Right ventricle myocardium inferior (tissue), 1 donor: ENCODE measurements at regions of chr9 and their contacts with region 1.

Region 1: GRCh38 chr9:70602321-70603019 is 188.0 kb upstream of the KLF9 start:
- DNase-seq: no peak
- ATAC-seq: peak; percentile 59

Region 2: DNA sequence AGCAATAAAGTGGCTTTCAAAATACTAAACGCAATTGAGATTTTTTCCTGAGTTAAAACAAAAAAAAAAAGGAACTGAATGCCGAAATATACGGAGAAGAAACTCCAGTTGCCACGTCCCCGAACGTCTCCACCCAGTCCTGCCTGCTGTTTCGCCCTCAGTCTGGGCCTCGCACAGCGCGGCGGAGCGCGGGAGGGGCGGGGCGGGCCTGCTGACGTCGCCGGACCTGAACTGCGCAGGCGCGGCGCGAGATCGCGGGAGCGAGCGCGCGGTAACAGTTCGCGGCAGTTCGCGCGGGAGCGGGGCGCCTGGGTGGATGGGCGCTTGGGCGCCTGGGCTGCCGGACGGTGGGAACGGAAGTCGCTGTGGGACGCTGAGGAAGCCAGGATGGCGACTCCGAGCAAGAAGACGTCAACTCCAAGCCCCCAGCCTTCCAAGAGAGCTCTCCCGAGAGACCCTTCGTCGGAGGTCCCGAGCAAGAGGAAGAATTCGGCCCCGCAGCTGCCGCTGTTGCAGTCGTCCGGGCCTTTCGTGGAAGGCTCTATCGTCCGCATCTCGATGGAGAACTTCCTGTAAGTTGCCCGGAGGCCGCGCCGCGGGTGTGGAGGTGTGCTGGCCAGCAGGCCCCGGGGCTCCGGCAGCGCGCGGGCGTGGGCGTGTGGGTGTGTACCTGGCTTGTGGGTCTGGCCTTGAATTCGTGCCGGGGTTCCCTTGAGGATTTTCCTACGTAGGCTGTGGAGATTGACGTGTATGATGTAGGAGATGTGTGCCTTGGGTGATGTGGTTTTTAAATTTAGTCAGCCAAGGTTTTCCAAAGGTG is 343.6 kb before region 1 on chr9 and contains the start of gene SMC5:
- intact Hi-C with region 1: loop called (anchors 5 kb)
- DNase-seq: peak; percentile 95
- ATAC-seq: peak; percentile 98
- total RNA-seq, gene SMC5: 10.0 TPM

Region 3: DNA sequence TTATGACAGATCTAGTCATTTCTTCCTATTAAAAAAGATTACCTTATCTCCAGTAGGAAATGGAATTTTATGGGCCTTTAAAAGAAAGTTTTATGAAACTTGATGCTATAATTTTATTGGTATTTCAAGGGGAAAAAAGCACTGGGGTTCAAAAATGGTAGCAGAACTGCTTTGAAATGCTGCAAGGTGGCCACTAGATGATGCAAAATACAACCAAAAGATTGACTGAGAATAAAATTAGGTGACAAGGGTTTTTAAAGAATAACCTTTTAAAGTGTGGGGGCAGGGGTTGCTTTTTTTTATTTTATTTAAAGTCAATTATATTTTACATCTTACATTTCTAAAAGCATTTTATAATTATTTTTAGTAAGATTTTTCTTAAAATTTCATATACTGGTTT is 249.7 kb before region 1 on chr9:
- intact Hi-C with region 1: loop called (anchors 1 kb)
- DNase-seq: no peak
- ATAC-seq: no peak

Region 4: DNA sequence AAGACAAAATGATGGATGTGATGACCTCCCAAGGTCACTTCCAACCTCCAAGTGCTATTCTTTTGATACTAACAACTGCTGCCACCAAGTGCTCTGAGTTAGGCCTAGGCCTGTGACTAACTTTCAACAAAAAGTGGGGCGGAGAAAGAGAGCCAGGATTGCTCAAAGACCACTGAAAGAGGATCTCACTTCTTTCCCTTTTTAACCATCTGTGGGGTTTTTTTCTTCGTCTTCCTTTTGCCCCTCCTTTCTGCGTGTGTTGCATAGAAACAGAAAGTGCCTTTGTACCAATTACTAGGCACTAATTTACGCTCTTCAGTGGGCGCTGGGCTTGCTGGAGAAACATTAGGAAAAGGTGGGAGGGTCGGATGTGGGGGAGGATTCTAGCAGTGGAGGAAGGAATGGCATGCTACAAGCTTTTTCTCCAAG is 196.0 kb before region 1 on chr9:
- intact Hi-C with region 1: loop called (anchors 5 kb)
- DNase-seq: no peak
- ATAC-seq: no peak

Region 5: DNA sequence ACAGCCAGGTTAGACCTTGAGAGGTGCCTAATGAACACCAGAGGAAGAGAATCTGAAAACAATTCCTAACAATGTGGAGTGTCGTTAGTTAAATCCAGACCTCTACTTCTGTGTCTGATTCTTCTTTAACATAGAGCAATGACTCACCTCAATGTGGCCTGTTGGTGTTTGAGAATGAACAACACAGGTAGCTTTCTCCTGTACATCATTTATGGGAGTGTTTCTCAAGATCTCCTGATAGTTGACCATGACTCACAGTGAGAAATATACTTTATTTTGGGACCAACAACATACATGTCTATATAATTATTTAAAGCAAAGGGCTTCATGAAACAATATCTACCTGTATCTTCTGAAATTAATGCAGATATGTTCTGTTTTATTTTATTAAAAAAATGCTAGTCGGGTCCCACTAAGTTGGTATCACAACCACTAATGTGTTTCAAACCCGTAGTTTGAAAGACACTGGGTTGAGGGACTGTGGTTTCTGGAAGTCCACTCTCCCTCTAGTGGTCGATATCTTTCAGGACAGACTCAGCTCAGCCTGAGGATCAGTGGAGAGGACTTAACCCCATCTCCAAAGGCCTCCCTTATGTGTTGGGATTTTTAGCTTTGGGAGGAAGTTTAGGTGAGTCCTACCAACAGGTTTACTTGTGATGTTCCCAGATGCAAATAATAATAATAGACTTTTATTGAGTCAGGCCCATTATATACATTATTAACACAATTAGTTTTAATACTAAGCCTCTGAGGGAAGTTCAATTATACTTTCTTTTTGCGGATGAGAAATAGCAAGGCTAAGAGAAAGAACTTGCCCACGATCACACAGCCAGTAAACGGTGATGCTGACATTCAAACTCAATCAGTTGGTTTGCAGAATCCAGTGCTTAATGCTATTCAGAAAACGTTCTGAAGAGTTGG is 118.0 kb before region 1 on chr9:
- intact Hi-C with region 1: loop called (anchors 1 kb)
- DNase-seq: no peak
- ATAC-seq: peak; percentile 67

Region 6: GRCh38 chr9:70553707-70554673 is 48.5 kb before region 1 on chr9:
- intact Hi-C with region 1: no loop called
- DNase-seq: no peak
- ATAC-seq: peak; percentile 85